ENCODE measurements at regions of chr7 and their contacts with region 1.

Region 1: DNA sequence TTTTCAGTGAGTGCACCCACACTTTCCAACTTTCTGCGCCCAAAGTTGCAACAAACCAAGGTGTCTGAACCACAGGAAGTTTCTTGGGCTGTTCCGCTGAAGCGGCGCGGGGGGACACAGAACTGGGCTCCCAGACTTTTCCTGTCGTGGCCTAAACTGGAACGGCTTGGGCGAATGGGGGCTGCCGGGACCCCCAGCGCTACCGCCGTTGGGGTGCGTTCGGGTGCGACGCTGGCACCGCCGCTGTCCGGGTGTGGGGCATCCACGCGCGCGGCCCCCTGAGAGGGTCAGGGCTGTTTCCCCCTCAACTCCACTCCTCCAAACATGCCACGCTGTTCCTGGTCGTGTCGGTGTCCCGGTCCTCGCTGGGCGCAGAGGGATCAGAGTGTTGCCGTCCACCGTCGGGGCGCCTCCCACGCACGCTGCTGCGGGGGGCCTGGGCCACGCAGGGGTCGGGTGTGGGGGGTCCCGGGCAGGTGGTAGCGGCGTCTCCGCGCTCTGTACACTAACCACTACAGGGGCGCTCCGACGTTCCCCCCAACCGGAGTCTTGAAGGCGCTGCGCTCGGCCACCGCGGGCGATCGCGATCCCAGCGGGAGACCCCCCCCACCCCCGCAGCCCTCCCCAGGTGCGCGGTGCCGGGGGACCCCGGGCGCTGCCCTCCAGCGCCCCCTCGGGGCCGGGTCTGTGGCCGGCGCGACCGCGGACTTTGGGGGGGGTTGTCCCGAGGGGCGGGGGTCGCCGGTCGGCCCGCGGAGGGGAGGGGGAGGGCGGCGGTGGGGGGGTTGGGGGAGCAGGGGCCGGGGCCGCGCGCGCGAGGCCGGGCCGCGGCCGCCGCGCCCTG is 2.2 kb upstream of the CUX1 start:
- DNase-seq: peak; percentile 59
- H3K4me3 Mint-ChIP-seq: peak overlapping the region; percentile 78
- H3K27ac Mint-ChIP-seq: peak overlapping the region; percentile 58
- H3K4me1 Mint-ChIP-seq: peaks cover 15% of the 10 kb centered on the region
- H3K27me3 Mint-ChIP-seq: peaks cover 25% of the 10 kb centered on the region

Region 2: GRCh38 chr7:101743241-101743994 is 71.8 kb before region 1 on chr7:
- CTCF ChIA-PET with region 1: interaction called, 14 read pairs
- POLR2A ChIA-PET with region 1: interaction called, 8 read pairs
- DNase-seq: peak; percentile 74
- H3K4me3 Mint-ChIP-seq: peak overlapping the region; percentile 75
- H3K27ac Mint-ChIP-seq: peak overlapping the region; percentile 42
- H3K4me1 Mint-ChIP-seq: peaks cover 54% of the 10 kb centered on the region
- H3K27me3 Mint-ChIP-seq: no peaks in the 10 kb centered on the region